Heart right ventricle (tissue), 16 donors: ENCODE measurements at regions of chr14 and their contacts with region 1.

Region 1: GRCh38 chr14:92630367-92630766 is 116.8 kb downstream of the RIN3 start:
- DNase-seq: no peak
- ATAC-seq: no peak
- H3K4me3 ChIP-seq: no peak overlapping the region
- H3K27ac ChIP-seq: no peak overlapping the region
- H3K4me1 ChIP-seq: peaks cover 0 to 17% (median 0%) of the 10 kb centered on the region in 9 donors
- H3K27me3 ChIP-seq: no peaks in the 10 kb centered on the region
- CTCF ChIP-seq: no peak

Region 2: DNA sequence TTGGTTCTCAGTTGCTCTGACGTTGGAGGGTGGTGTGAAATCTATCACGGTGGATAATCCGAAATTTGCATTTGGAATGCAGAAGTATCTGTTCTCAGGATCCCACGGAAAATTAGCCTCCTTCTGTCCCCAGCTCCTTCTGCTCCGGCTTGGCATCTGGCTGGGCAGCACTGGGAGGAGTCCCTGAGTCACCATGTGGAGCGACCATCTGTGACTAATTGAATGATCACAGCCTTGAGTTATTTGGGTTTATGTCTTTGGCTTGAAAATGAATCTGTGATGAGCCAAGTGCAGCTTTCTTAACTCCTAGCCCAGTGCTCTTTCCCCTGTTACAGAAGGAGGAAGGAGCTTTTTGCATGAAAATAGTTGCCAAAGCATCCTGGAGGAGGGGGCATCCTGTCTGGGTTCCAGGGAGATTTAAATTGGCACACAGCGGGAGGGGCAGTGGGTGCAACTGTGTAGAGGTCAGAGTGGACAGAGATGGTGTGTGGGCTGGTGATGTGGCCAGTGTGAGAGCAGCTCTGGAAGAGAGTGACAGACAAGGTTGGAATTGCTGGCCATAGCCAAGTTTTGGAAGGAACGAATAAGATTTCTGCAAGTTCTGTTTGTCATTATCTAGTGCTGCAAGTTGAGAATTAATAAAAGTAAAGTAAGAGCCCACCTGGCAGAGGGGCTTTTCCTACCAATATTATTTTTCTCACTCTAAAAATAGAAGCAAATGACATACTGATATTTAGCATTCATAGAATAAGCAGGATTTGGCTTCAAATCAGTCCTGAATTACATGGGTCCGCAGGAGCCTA is 233.0 kb before region 1 on chr14:
- intact Hi-C with region 1: no loop called
- DNase-seq: no peak
- ATAC-seq: peak in 1 of 8 donors; percentile 24
- H3K4me3 ChIP-seq: no peak overlapping the region
- H3K27ac ChIP-seq: peak overlapping the region in 1 of 10 donors; percentile 46
- H3K4me1 ChIP-seq: peaks cover 0 to 49% (median 0%) of the 10 kb centered on the region in 9 donors
- H3K27me3 ChIP-seq: peaks cover 0 to 4% (median 0%) of the 10 kb centered on the region in 7 donors
- CTCF ChIP-seq: no peak

Region 3: DNA sequence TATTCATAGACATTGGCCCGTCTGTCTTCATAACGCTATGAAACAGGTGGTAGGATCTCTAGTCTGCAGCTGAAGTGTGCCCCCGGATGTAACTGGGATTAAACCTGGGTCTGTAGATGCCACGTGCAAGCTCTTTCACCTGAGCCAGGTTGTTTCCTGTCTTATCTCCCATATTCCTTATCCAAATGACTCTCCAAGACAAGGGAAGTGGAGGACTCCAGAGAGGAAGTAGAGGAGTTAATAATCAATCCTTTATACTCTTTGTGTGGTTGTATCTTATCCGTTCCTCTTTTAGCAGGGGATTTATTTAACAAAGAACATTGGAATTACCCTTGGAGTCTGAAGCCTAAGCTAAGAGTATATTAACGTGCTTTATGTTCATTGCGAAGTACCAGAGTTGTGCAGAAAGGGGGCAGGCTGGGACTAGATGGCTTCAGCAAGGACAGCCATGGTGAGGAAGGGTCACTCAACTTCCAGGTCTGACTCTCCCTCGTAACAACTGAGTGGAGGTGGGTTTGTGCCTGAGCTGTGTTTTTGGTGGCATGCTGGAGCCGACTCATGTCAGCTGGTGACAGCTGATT is 33.9 kb before region 1 on chr14:
- intact Hi-C with region 1: no loop called
- DNase-seq: no peak
- ATAC-seq: no peak
- H3K4me3 ChIP-seq: no peak overlapping the region
- H3K27ac ChIP-seq: no peak overlapping the region
- H3K4me1 ChIP-seq: peaks cover 0 to 15% (median 4%) of the 10 kb centered on the region in 9 donors
- H3K27me3 ChIP-seq: no peaks in the 10 kb centered on the region
- CTCF ChIP-seq: no peak

Region 4: GRCh38 chr14:92673601-92674150 is 43.3 kb after region 1 on chr14:
- intact Hi-C with region 1: loop called in 1 of 10 experiments (anchors 2 kb)
- DNase-seq: no peak
- ATAC-seq: no peak
- H3K4me3 ChIP-seq: no peak overlapping the region
- H3K27ac ChIP-seq: no peak overlapping the region
- H3K4me1 ChIP-seq: peaks cover 0 to 52% (median 0%) of the 10 kb centered on the region in 9 donors
- H3K27me3 ChIP-seq: no peaks in the 10 kb centered on the region
- CTCF ChIP-seq: no peak